ENCODE measurements at regions of chr2 and their contacts with region 1.

Region 1: DNA sequence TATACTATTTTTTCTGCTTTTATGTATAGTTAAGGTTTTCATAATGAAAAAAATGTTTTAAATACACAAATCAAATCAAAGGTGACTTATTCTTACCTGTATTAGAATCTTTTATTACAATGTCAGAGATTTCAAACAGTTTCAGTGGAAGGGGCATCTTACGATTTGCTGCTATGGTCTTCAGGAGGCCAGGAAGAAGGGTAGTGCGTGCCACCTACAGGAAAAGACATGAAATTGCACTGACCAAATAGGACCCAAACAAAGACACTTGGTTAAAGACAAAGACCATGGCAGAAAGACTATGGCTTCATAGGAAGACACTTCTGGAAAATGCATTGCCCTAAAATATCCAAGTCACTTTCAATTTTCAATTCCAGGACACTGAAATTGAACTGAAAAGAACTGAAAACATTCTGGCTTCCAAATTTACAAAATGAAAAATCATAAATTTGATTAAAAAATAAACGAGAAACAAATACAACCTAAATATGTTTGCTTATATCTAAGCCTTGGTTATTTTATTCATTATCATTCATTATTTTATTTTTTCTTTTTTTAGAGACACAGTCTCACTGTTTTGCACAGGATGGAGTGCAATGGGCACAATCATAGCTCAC is 42.1 kb downstream of the FARSB start:
- DNase-seq: peak in 2 of 9 experiments; percentile 26 to 43
- ATAC-seq: peak; percentile 62
- H3K4me3 ChIP-seq: no peak overlapping the region
- H3K4me3 Mint-ChIP-seq: no peak overlapping the region
- H3K27ac ChIP-seq: no peak overlapping the region
- H3K27ac Mint-ChIP-seq: no peak overlapping the region
- H3K4me1 ChIP-seq: no peaks in the 10 kb centered on the region
- H3K4me1 Mint-ChIP-seq: no peaks in the 10 kb centered on the region
- H3K27me3 ChIP-seq: no peaks in the 10 kb centered on the region
- H3K27me3 Mint-ChIP-seq: no peaks in the 10 kb centered on the region
- CTCF ChIP-seq: peak; percentile 63

Region 2: DNA sequence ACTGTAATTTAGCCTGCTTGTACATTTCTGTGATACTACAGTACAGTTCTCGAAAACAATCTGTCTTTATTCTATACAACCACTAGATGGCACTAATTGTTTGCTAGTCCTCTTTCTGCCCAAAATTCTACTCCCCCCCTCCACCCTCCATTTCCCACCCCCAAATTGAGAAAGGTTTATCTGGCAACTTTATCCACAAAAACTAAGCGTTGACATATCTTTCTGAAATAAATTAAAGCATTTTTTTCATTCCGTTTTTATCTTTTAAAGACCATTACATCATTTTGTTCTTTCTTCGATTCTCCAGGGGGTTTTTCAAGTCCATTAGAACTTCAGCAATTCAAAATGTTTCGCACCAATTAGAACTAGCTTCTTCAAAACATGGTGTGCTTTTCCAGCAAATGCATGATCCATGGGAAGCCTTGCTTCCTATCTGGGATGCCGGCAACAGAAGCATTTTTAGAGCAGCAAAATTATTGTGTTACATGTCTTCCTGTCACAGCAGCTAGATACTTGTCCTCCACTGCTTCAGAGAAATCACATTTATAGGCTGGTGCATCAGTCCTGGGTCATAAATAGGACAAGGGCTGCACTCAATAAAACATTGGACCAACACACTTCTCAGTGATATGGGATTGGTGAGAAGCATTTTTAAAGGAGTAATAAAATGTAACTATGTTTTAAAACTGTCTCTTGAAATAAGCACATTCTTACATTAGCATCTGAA is 556.3 kb before region 1 on chr2:
- CTCF ChIA-PET with region 1: no interaction called
- POLR2A ChIA-PET with region 1: no interaction called
- intact Hi-C with region 1: loop called (anchors 5 kb)
- DNase-seq: peak in 1 of 9 experiments; percentile 2
- ATAC-seq: no peak
- H3K4me3 ChIP-seq: no peak overlapping the region
- H3K4me3 Mint-ChIP-seq: no peak overlapping the region
- H3K27ac ChIP-seq: no peak overlapping the region
- H3K27ac Mint-ChIP-seq: no peak overlapping the region
- H3K4me1 ChIP-seq: no peaks in the 10 kb centered on the region
- H3K4me1 Mint-ChIP-seq: no peaks in the 10 kb centered on the region
- H3K27me3 ChIP-seq: no peaks in the 10 kb centered on the region
- H3K27me3 Mint-ChIP-seq: peaks cover 9% of the 10 kb centered on the region
- CTCF ChIP-seq: peak; percentile 52

Region 3: DNA sequence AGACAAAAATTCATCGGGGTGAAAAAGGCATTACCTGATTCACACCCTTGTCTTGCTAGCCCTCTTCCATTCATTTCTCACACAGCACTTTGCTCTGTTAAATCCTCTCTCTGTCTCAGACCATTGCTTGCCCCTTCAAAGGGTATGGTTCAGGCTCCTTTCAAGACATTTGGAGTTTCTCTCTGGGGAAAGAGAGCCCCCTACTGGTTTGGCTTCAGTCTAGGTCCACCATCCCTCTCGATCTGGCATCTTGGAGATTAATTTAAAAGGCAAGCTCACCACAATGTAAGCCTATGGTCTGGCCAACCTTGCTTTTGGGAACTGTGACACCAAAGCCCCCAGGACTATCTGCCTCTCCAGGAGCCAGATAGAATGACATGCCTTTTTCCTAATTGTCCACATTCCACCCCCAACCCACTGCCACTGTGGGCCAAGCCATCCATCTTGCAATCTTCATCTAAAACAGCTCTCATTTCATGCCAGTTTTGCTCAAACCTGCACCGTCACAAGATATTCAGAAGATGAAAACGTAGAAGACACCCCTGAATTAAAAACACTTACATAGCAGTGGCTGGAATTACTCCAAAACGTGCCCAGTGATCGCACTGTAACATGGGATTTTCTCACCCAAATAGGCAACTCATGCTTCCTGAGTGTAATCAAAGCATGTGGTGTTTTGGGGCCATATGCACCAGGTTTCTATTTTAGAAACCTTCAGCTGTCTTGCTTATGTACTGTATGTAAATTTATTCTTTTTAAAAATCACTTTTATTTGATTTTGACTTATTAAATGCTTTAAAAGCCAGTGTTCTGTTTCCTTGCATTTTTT is 51.8 kb before region 1 on chr2:
- CTCF ChIA-PET with region 1: no interaction called
- POLR2A ChIA-PET with region 1: no interaction called
- intact Hi-C with region 1: no loop called
- DNase-seq: peak in 3 of 9 experiments; percentile 14 to 30 (median 27)
- ATAC-seq: no peak
- H3K4me3 ChIP-seq: no peak overlapping the region
- H3K4me3 Mint-ChIP-seq: no peak overlapping the region
- H3K27ac ChIP-seq: no peak overlapping the region
- H3K27ac Mint-ChIP-seq: no peak overlapping the region
- H3K4me1 ChIP-seq: no peaks in the 10 kb centered on the region
- H3K4me1 Mint-ChIP-seq: no peaks in the 10 kb centered on the region
- H3K27me3 ChIP-seq: no peaks in the 10 kb centered on the region
- H3K27me3 Mint-ChIP-seq: peaks cover 1% of the 10 kb centered on the region
- CTCF ChIP-seq: no peak